HEK293 (cell line): ENCODE measurements at regions of chr1 and their contacts with region 1.

Region 1: GRCh38 chr1:204989266-204990058 is 53.5 kb upstream of the CNTN2 start:
- H3K4me3 ChIP-seq: no peak overlapping the region
- H3K27ac ChIP-seq: no peak overlapping the region
- H3K4me1 ChIP-seq: no peaks in the 10 kb centered on the region
- CTCF ChIP-seq: peak; percentile 88

Region 2: GRCh38 chr1:204975570-204976235 is 13.8 kb before region 1 on chr1:
- CTCF ChIA-PET with region 1: interaction called, 24 read pairs
- POLR2A ChIA-PET with region 1: interaction called, 3 read pairs
- H3K4me3 ChIP-seq: no peak overlapping the region
- H3K27ac ChIP-seq: no peak overlapping the region
- H3K4me1 ChIP-seq: no peaks in the 10 kb centered on the region
- CTCF ChIP-seq: peak; percentile 84

Region 3: GRCh38 chr1:205048382-205048781 is 58.9 kb after region 1 on chr1:
- CTCF ChIA-PET with region 1: interaction called, 10 read pairs
- POLR2A ChIA-PET with region 1: no interaction called
- H3K4me3 ChIP-seq: no peak overlapping the region
- H3K27ac ChIP-seq: no peak overlapping the region
- H3K4me1 ChIP-seq: no peaks in the 10 kb centered on the region
- CTCF ChIP-seq: no peak

Region 4: GRCh38 chr1:205068457-205069040 is 79.1 kb after region 1 on chr1:
- CTCF ChIA-PET with region 1: interaction called, 282 read pairs
- POLR2A ChIA-PET with region 1: no interaction called
- H3K4me3 ChIP-seq: no peak overlapping the region
- H3K27ac ChIP-seq: no peak overlapping the region
- H3K4me1 ChIP-seq: no peaks in the 10 kb centered on the region
- CTCF ChIP-seq: no peak

Region 5: GRCh38 chr1:205321164-205321958 is 331.9 kb after region 1 on chr1 and contains the start of gene NUAK2:
- CTCF ChIA-PET with region 1: interaction called, 11 read pairs
- POLR2A ChIA-PET with region 1: no interaction called
- H3K4me3 ChIP-seq: peak within 1 kb of the TSS; percentile 74
- H3K27ac ChIP-seq: peak within 1 kb of the TSS; percentile 18; the same call in 1 of the 2 replicates
- H3K4me1 ChIP-seq: peaks cover 10% of the 10 kb centered on the region
- CTCF ChIP-seq: peak; percentile 85